BJ (cell line): ENCODE measurements at regions of chr1 and their contacts with region 1.

Region 1: DNA sequence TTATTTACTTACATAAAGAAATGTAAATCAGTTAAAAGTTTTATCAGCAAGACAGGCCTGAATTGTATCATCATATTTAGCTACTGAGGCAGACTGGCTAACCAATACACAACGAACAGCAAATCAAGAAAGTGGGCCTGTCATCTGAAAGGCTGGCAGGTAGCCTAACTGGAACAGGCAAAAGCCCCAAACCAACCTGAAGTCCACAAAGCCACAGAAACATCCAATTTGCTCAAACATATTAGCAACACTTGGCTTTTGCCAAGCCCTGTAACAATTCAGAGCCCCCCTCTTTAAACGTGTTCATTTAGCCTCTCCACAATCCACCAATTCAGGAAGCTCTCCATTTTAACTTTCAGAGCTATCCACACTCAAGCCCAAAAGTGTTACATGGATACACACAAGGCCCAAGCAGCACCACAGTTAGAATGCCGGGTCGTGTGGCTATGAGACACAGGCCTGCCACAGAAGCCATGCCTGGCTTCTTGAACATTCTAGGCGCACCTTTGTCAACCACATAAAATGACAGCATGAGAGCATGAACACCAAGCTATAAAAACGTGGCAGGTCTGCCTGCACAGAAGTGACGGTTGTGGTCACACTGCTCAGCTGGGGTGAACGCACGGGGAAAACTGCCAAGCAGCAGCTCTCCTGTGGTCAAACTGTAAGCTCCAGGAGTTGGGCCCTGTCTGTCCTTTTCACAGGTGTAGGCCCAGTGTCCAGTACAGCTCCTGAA is 49.3 kb downstream of the CD34 start:
- DNase-seq: no peak
- H3K4me3 ChIP-seq: no peak overlapping the region
- H3K27me3 ChIP-seq: no peaks in the 10 kb centered on the region
- CTCF ChIP-seq: no peak

Region 2: DNA sequence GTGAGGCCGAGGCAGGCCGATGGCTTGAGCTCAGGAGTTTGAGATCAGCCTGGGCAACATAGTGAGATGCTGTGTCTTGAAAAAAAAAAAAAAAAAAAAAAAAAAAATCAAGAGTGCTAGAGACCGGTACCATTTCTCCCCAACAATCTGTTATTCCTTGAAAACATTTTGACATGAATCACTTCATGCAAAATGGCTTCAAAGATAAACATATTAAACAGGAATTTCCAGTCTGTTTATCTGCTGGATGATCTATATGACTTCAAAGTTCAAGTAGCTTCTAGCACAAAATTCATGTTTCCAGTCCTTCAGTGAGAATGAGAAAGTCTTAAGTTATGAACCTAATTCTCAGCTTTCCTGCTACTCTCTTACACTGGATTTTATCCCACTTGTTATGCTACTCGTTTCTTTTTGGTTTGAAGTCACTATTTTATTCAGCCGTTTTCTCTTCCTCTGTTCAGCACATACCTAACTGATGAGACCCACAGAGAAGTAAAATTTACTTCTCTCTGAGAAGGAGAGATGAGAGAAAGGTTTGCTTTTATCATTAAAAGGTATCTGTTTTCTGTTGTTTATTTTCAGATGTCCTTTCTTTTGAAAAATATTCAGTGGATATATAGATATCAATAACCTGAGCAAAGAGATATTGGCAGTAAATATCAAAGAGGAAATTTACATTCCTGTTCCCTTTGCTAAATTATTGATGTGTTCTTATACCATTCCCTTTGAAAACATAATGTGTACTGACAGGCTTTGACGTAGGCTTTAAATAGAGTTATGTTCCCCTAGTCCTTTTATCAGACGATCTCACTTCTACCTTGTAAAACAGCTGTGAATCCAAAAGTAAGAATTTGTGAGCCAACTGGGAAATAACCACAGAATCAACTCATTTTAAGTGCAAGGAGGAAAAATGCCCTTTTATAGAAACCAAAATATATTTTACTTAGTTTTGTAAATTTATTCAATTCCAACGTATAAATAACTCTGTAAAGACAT is 71.5 kb before region 1 on chr1:
- CTCF ChIA-PET with region 1: no interaction called
- POLR2A ChIA-PET with region 1: interaction called, 14 read pairs
- DNase-seq: no peak
- H3K4me3 ChIP-seq: no peak overlapping the region
- H3K27me3 ChIP-seq: no peaks in the 10 kb centered on the region
- CTCF ChIP-seq: no peak

Region 3: GRCh38 chr1:207828485-207829158 is 33.0 kb before region 1 on chr1:
- CTCF ChIA-PET with region 1: interaction called, 332 read pairs
- POLR2A ChIA-PET with region 1: interaction called, 11 read pairs
- DNase-seq: peak; percentile 59
- H3K4me3 ChIP-seq: no peak overlapping the region
- H3K27me3 ChIP-seq: no peaks in the 10 kb centered on the region
- CTCF ChIP-seq: peak; percentile 89

Region 4: DNA sequence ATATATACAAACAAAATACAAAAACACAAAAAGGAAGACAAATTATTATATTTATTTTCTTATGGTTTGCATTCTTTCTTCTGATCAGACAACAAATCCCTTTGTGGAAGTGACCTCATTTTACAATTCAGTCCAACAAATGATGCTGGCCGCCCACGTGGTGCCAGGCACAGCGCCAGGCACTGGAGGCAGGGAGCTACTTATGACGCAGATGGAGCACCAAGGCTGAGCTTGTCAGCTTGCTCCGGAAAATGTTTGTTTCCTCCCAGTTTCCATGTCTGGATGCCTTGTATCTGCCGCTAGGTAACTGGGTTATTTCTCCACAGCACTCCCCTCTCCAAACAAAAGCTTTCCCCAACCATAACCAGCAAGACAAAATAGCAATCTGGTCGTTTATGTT is 80.1 kb after region 1 on chr1:
- CTCF ChIA-PET with region 1: no interaction called
- POLR2A ChIA-PET with region 1: interaction called, 15 read pairs
- DNase-seq: no peak
- H3K4me3 ChIP-seq: no peak overlapping the region
- H3K27me3 ChIP-seq: no peaks in the 10 kb centered on the region
- CTCF ChIP-seq: no peak